A673 (cell line): ENCODE measurements at regions of chr2 and their contacts with region 1.

Region 1: GRCh38 chr2:126971481-126972278 is 73.0 kb downstream of the TEX51 start:
- DNase-seq: peak; percentile 75
- H3K4me3 ChIP-seq: peak overlapping the region; percentile 42
- H3K27ac ChIP-seq: no peak overlapping the region
- H3K4me1 ChIP-seq: peaks cover 27% of the 10 kb centered on the region
- H3K27me3 ChIP-seq: peaks cover 14% of the 10 kb centered on the region
- CTCF ChIP-seq: peak; percentile 91

Region 2: GRCh38 chr2:126527836-126528507 is 443.7 kb before region 1 on chr2:
- CTCF ChIA-PET with region 1: interaction called, 11 read pairs
- POLR2A ChIA-PET with region 1: no interaction called
- intact Hi-C with region 1: loop called (anchors 1 kb)
- DNase-seq: peak; percentile 41
- H3K4me3 ChIP-seq: no peak overlapping the region
- H3K27ac ChIP-seq: no peak overlapping the region
- H3K4me1 ChIP-seq: no peaks in the 10 kb centered on the region
- H3K27me3 ChIP-seq: no peaks in the 10 kb centered on the region
- CTCF ChIP-seq: peak; percentile 68

Region 3: GRCh38 chr2:126982935-126983334 is 11.3 kb after region 1 on chr2:
- CTCF ChIA-PET with region 1: no interaction called
- POLR2A ChIA-PET with region 1: no interaction called
- intact Hi-C with region 1: no loop called
- DNase-seq: no peak
- H3K4me3 ChIP-seq: no peak overlapping the region
- H3K27ac ChIP-seq: no peak overlapping the region
- H3K4me1 ChIP-seq: no peaks in the 10 kb centered on the region
- H3K27me3 ChIP-seq: peaks cover 15% of the 10 kb centered on the region
- CTCF ChIP-seq: no peak

Region 4: DNA sequence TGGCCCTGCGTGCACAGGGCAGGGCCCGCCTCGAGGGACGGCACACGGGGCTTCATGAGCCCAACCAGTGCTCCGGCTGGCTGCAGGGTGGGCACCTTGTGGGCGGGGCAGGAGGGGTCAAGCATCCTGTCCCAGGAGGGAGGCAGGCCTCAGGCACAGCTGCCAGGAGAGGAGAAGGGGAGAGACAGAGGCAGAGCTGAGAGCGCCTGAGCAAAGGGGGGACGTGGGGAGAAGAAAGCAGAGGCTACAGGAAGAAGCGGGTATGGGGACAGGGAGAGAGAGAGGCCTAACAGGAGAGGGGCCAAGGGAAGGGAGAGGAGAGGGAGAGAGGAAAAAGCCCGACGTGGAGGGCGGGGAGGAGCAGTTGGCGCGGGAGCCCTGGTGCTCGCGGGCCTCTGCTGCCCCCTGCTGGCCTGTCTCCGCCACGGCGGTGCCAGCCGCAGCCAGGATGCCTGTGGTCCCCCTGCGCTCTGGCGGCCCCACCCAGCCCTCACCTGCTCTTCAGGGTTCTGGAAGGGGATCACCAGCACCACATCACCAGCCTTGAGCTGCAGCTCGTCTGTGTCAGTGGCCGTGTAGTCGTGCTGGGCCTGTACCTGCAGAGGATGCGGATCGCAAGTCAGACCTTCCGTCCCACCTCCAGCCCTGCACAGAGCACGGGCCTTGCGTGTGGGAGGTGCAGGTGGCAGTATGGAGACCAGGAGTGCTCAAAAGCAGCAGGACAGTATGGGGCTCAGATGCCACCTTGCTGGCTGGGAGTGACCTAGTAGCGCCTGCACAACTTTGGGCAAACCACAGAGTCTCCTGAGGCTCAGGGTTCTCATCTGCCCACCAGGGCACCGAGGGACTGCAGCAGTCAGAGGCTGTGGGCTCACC is 78.5 kb after region 1 on chr2:
- CTCF ChIA-PET with region 1: interaction called, 3 read pairs
- POLR2A ChIA-PET with region 1: no interaction called
- intact Hi-C with region 1: loop called (anchors 2 kb)
- DNase-seq: peak; percentile 67
- H3K4me3 ChIP-seq: no peak overlapping the region
- H3K27ac ChIP-seq: no peak overlapping the region
- H3K4me1 ChIP-seq: no peaks in the 10 kb centered on the region
- H3K27me3 ChIP-seq: no peaks in the 10 kb centered on the region
- CTCF ChIP-seq: peak; percentile 95